Colonic mucosa (tissue), 4 donors: ENCODE measurements at regions of chr1 and their contacts with region 1.

Region 1: GRCh38 chr1:162633081-162633762 is 958 bp downstream of the DDR2 start:
- DNase-seq: no peak
- H3K4me3 ChIP-seq: peak overlapping the region; percentile 18
- H3K27ac ChIP-seq: peak overlapping the region; percentile 73
- H3K4me1 ChIP-seq: no peaks in the 10 kb centered on the region
- H3K27me3 ChIP-seq: no peaks in the 10 kb centered on the region
- CTCF ChIP-seq: no peak

Region 2: DNA sequence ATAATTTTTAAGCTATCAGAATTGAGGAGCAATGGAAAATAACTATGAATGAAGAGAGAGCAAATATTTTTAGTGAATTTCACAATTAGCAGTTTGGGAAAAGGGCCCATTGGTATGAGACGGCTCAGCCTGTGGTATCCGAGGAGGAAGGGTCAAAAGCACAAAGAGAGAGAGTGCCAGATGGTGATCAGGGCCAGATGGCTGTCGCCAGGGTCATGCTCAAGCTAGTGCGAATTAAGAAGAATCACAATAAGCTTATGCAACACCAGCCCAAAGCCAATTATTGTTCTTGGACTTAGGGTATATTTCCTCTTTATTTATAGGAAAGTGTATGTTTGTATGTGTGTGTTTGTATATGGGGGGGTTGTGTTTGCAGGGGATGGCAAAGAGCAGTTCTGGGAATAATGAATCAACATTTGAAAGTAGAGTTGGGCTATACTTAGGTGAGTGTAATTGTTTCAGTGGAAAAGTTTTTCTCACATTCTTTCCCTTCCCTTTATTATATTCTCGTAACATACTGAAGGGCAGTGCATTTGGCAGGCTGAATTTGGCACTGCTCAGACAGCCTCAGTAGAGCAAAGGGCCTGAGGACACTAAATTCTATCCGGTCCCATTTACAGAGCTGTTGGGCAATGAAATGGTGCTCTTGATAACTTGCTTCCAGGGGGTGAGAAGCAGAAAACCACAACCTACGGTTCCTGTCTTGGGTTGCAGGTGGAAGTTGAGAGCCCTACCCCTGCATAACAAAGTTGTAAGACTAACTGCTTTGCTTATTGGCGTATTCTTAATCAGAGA is 20.4 kb before region 1 on chr1:
- intact Hi-C with region 1: no loop called
- DNase-seq: no peak
- H3K4me3 ChIP-seq: no peak overlapping the region
- H3K27ac ChIP-seq: no peak overlapping the region
- H3K4me1 ChIP-seq: no peaks in the 10 kb centered on the region
- H3K27me3 ChIP-seq: no peaks in the 10 kb centered on the region
- CTCF ChIP-seq: no peak

Region 3: DNA sequence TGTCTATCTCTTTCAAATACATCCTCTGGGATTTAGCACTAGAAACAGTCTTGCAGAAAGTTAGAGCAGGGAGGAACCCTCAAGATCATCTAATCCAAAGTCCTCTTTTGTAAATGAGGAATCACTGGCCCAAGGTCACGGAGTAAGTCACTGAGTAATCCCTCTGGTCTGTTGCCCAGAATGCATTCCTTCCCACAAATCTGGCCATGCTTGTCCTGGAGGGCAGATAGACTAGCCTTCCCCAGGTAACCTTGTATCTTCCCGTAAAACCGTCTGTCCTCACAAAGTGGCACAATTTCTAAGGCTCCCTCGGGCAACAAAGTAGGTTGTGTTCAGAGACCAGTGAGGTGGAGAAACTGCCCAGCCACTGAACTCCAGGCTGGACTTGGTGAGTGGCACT is 45.2 kb after region 1 on chr1:
- intact Hi-C with region 1: loop called (anchors 5 kb)
- DNase-seq: no peak
- H3K4me3 ChIP-seq: no peak overlapping the region
- H3K27ac ChIP-seq: no peak overlapping the region
- H3K4me1 ChIP-seq: no peaks in the 10 kb centered on the region
- H3K27me3 ChIP-seq: no peaks in the 10 kb centered on the region
- CTCF ChIP-seq: no peak